ENCODE measurements at regions of chr12 and their contacts with region 1.

Region 1: DNA sequence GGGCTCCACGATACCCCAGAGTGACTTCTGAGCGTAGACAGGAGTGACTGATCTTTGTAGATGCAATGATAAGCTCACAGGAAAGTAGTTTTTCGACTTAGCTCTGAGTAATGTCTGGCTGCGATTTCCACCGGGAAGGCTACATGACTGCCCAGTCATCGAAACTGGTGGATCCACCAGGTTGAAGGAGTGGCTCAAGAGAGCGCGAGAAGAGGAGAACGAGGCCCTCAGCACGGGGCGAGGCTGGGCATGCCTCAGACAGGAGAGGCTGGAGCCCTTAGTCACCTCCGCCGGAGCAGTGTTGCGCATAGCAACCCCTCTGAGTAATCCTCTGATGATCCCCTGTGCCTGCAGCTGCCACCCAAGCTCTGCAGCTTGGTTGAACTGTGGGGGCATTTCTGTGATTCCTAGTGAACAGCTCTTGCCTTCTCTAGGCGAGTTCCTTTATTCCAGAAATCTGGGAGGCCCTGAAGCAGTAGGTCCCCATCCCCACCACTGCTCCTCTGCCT is 25.6 kb downstream of the ELK3 start:
- DNase-seq: peak; percentile 96 to 99
- H3K4me3 ChIP-seq: peak overlapping the region; percentile 56
- H3K27ac ChIP-seq: peak overlapping the region; percentile 100
- H3K4me1 ChIP-seq: peaks cover 53% of the 10 kb centered on the region
- H3K27me3 ChIP-seq: no peaks in the 10 kb centered on the region
- CTCF ChIP-seq: no peak

Region 2: GRCh38 chr12:95918194-95918993 is 301.4 kb before region 1 on chr12:
- CTCF ChIA-PET with region 1: interaction called, 11 read pairs
- POLR2A ChIA-PET with region 1: no interaction called
- intact Hi-C with region 1: no loop called
- DNase-seq: peak; percentile 9 to 39
- H3K4me3 ChIP-seq: no peak overlapping the region
- H3K27ac ChIP-seq: no peak overlapping the region
- H3K4me1 ChIP-seq: no peaks in the 10 kb centered on the region
- H3K27me3 ChIP-seq: no peaks in the 10 kb centered on the region
- CTCF ChIP-seq: peak; percentile 86

Region 3: DNA sequence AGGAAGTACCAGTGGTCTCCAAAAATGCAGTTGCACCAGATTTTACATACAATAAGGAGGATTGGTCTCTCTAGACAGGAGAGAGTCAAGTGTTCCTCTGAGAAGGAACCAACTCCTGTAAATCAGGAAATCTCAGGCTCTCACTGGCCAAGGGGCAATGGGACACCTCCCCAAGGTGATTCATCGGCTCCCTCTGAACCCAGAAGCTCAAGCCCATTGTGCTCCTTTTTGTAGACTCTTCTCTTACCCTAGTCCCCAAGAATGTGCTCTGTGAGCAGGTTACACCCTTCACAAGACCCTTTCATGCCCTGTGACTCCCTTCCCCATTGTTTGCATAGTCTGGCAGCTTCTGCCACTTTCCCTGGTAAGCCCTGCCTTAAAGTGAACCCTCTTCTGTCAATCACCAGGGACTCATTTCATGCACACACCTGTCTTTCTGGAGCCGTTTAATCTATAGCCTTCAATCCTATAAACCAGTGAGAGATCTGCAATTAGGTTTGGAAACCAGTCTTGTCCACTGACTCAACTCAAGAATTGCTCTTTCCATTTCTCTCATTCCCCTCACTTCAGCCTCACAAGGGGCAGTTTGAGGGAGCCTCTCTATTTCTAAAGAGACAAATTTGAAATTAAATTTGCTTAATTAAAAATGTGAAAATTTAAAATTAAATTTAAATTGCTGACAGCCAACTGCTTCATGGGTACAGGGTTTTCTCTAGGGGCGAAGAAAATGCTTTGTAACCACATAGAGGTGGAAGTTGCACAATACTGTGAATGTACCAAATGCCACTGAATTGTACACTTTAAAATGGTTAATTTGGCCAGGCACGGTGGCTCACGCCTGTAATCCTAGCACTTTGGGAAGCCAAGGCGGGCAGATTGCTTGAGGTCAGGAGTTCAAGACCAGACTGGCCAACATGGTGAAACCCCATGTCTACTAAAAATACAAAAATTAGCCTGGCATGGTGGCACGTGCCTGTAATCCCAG is 146.1 kb before region 1 on chr12:
- CTCF ChIA-PET with region 1: interaction called, 16 read pairs
- POLR2A ChIA-PET with region 1: interaction called, 9 read pairs
- intact Hi-C with region 1: loop called (anchors 1 kb)
- DNase-seq: peak; percentile 86 to 100
- H3K4me3 ChIP-seq: peak overlapping the region; percentile 19; the same call in 1 of the 2 replicates
- H3K27ac ChIP-seq: peak overlapping the region; percentile 95
- H3K4me1 ChIP-seq: peaks cover 62% of the 10 kb centered on the region
- H3K27me3 ChIP-seq: no peaks in the 10 kb centered on the region
- CTCF ChIP-seq: 0 out of 2 replicates have a peak, but pooled peaks have one; percentile 5

Region 4: DNA sequence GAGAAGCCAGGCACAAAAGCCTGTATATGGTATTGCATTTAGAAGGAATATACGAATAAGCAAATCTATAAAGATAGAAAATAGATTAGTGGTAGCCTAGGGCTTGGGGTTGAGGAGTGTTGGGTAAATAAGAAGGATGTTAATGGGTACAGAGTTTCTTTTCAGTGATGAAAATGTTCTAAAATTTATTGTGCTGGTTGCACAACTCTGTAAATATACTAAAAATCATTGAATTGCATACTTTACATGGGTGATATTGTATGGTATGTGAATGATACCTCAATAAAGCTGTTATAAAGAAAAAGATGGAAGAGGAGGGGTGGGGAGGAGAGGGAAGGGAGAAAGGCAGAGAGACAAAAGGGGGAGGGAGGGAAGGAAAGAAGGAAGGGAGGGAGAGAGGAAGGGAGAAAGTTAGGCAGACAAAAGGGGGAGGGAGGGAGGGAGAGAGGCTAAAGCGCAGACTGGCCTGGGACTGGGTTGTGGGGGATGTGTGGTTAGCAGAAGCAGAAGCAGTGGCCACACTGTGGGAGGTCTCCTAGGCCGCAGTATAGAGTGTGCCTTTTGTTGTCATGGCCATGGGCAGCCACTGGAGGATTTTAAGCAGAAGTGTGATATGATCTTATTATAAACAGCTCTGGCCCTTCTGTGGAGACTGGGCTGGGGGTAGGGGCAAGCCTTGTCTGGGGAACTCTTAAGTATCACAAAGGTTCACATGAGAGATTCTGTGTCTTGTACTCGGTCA is 99.2 kb before region 1 on chr12:
- CTCF ChIA-PET with region 1: no interaction called
- POLR2A ChIA-PET with region 1: no interaction called
- intact Hi-C with region 1: no loop called
- DNase-seq: no peak
- H3K4me3 ChIP-seq: no peak overlapping the region
- H3K27ac ChIP-seq: no peak overlapping the region
- H3K4me1 ChIP-seq: no peaks in the 10 kb centered on the region
- H3K27me3 ChIP-seq: no peaks in the 10 kb centered on the region
- CTCF ChIP-seq: no peak

Region 5: DNA sequence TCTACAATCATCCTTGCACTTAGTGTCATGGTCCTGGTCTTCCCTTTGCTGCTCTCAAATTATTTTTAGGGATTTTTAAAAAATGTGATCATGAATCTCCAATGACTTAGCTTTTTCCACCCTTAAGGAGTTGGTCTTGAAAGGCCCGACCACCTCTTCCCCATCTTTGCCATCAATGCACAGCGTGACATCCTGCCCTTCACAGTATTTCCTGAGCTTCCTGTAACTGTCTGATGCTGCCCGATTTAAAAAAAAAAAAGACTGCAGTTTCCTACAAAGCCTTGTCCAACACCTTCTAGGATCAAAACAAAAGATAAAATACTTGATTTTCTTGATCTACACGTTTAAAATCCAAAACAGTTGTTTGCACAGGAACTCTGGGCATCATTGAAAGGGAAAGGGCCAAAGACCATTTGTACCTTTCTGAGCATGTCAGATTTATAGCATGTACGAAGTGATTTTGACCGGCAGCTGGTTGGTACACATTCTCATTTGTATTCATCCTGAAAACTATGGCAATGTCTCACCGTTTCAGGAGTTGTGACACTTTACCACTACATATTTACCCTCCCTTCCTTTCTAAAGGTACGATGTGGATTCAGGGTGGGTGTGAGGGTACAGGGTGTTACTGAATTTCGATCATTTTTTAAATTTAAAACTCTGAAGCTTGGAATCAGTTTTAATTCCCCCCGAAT is 33.0 kb before region 1 on chr12:
- CTCF ChIA-PET with region 1: interaction called, 13 read pairs
- POLR2A ChIA-PET with region 1: no interaction called
- intact Hi-C with region 1: no loop called
- DNase-seq: no peak
- H3K4me3 ChIP-seq: no peak overlapping the region
- H3K27ac ChIP-seq: no peak overlapping the region
- H3K4me1 ChIP-seq: no peaks in the 10 kb centered on the region
- H3K27me3 ChIP-seq: no peaks in the 10 kb centered on the region
- CTCF ChIP-seq: no peak

Region 6: DNA sequence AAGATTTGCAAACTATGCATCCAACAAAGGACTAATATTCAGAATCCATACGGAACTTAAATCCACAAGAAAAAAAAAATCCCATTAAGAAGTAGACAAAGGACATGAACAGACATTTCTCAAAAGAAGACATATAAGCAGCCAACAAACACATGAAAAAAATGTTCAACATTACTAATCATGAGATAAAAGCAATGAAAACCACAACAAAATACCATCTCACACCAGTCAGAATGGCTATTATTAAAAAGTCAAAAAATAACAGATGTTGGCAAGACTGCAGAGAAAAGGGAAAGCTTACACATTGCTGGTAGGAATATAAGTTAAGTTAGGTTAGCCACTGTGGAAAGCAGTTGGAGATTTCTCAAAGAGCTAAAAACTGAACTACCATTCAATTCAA is 164.2 kb after region 1 on chr12:
- CTCF ChIA-PET with region 1: no interaction called
- POLR2A ChIA-PET with region 1: interaction called, 13 read pairs
- intact Hi-C with region 1: no loop called
- DNase-seq: no peak
- H3K4me3 ChIP-seq: no peak overlapping the region
- H3K27ac ChIP-seq: no peak overlapping the region
- H3K4me1 ChIP-seq: no peaks in the 10 kb centered on the region
- H3K27me3 ChIP-seq: no peaks in the 10 kb centered on the region
- CTCF ChIP-seq: no peak

Region 7: DNA sequence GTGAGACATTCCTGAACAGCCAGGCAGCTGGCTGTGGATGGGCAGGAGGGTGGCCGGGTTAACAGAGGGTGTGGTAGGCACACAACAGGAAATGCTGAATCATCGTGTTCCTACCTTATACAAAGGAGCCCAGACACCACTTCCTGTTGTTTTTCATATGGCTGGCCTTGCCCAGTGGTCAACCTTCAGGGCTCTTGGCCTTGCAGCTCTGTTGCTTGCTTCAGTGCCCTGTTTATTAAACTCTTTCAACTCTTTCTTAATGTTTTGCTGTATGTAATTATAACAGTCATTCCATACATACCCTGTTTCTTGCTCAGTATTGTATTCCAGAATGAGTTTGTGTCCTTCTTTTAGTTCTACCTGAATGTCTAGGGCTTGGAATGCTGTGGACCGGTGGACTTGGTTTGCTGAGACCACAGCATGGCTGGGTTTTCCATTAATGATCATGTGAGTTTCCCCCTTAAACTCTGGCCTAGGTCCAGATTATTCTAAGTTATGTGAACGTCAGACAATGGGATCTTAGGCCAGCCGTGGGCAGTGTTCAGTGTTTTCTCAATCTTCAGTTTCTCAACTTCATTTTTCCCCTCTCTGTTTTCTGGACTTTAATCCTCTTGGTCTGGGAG is 281.5 kb after region 1 on chr12:
- CTCF ChIA-PET with region 1: interaction called, 3 read pairs
- POLR2A ChIA-PET with region 1: no interaction called
- intact Hi-C with region 1: loop called (anchors 5 kb)
- DNase-seq: peak; percentile 72 to 85
- H3K4me3 ChIP-seq: peak overlapping the region; percentile 34; the same call in 1 of the 2 replicates
- H3K27ac ChIP-seq: peak overlapping the region; percentile 98
- H3K4me1 ChIP-seq: peaks cover 32% of the 10 kb centered on the region
- H3K27me3 ChIP-seq: no peaks in the 10 kb centered on the region
- CTCF ChIP-seq: no peak

Measured in PC-9 (cell line).